Thyroid gland (tissue), 4 donors: ENCODE measurements at regions of chr9 and their contacts with region 1.

Region 1: DNA sequence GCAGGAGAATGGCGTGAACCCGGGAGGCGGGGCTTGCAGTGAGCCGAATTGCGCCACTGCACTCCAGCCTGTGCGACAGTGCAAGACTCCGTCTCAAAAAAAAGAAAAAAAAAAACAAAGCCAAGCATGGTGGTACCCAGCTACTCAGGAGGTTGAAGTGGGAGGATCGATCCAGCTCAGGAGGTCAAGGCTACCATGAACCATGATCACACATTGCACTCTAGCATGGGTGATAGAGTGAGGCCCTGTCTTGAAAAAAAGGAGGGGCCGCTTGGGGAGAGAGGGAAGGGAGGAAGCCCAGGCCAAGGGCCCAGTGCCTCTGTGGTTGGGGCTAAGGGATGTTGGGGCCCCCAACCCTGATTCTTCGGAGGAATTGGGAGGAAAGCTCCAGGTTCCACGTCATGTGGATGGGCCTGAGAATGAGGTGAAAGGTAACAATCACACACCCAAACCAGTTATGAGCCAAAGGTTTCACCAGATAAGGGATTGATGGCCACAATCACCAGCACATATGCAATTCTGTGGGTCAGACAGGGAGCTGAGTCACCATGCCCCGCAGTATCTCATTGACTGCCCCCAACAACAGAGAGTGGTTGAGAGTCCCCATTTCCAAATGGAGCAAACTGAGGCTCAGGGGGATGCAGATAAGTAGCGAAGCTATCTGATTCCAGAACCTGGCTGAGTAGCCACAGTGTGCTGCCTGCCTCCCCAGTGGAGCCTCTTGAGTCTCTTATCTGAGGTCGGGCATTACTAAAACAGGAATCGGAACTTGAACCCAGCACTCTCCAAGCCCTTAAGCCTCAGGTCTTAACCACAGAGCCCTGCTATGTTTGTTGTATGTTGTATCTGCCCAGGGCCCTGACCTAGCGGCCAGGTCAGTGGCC is 20.5 kb downstream of the SWI5 start:
- DNase-seq: no peak
- H3K4me3 ChIP-seq: no peak overlapping the region
- H3K27ac ChIP-seq: no peak overlapping the region
- H3K4me1 ChIP-seq: peaks cover 0 to 4% of the 10 kb centered on the region in 2 donors
- H3K27me3 ChIP-seq: no peaks in the 10 kb centered on the region
- CTCF ChIP-seq: no peak
- POLR2A ChIP-seq: no peak

Region 2: DNA sequence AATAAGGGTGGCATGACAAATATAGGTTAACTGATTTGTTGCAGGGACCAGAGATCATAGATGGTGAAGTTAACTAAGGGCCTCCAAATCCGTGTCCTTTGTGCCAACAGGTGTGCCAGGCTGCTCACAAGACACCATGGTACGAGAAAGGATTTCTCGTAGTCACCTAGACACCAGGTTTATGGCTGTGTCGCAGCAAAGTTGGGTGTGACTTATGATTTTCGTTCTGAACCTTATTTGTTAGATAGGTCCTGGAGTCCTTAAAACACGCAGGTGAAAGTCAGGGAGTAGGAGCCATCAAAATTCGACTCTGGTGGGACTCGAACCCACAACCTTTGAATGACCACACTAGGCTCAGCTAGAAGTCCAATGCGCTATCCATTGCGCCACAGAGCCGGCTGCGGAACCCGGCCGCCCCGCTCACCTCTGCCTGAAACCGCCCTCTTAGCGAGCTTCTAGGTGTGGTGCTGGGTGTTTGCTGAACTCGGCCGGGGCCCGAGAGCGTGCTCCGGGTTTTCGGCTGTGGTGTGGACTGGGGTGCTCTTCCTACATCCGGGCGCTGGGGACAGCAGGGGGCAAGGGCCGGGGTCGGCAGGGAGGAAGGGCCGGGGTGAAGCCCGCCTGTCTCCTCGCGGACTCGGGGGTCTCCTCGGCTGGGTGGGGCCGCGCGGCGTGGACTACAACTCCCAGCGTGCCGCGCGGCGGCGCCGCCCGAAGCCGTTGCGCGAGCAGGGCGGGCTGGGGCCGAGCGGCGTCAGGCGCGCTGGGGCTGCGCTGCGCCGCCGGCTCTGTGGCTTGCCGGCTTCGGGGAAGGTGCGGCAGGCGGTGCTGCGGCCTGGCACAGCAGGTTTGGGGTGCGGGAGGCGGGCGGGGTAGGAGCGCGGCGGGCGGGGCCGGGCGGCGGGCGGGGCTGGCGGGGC is 43.5 kb after region 1 on chr9 and contains the start of gene SLC27A4:
- intact Hi-C with region 1: loop called (anchors 2 kb)
- DNase-seq: peak; percentile 80
- H3K4me3 ChIP-seq: peak within 1 kb of the TSS; percentile 4 to 79 (median 78)
- H3K27ac ChIP-seq: peak within 1 kb of the TSS; percentile 65 to 85 (median 74)
- H3K4me1 ChIP-seq: peaks cover 0 to 29% of the 10 kb centered on the region in 2 donors
- H3K27me3 ChIP-seq: no peaks in the 10 kb centered on the region
- CTCF ChIP-seq: peak in 1 of 6 experiments; percentile 2
- POLR2A ChIP-seq: peak in 1 of 2 donors; percentile 62
- total RNA-seq, gene SLC27A4: 15.9 to 38.4 (median 30.4) TPM